H1 (cell line): ENCODE measurements at regions of chr4 and their contacts with region 1.

Region 1: GRCh38 chr4:151015459-151016347 is 619 bp upstream of the LRBA start:
- DNase-seq: peak; percentile 73 to 91
- H3K4me3 ChIP-seq: peak overlapping the region; percentile 38 to 99 (median 82)
- H3K27ac ChIP-seq: peak overlapping the region; percentile 96
- H3K4me1 ChIP-seq: peaks cover 0 to 2% (median 0%) of the 10 kb centered on the region in 4 experiments; a peak in 1 of 7 replicates
- H3K27me3 ChIP-seq: no peaks in the 10 kb centered on the region
- CTCF ChIP-seq: no peak
- EP300 ChIP-seq: no peak; a peak in 1 of 3 replicates
- POLR2A ChIP-seq: peak; percentile 63 to 93
- RAD21 ChIP-seq: 0 out of 4 replicates have a peak, but pooled peaks of 1 of the 2 experiments have one; percentile 3

Region 2: GRCh38 chr4:151004222-151004621 is 11.5 kb before region 1 on chr4:
- CTCF ChIA-PET with region 1: no interaction called
- POLR2A ChIA-PET with region 1: interaction called, 44 read pairs
- DNase-seq: no peak
- H3K4me3 ChIP-seq: no peak overlapping the region
- H3K27ac ChIP-seq: no peak overlapping the region
- H3K4me1 ChIP-seq: peaks cover 0 to 7% (median 6%) of the 10 kb centered on the region in 4 experiments; a peak in 5 of 7 replicates
- H3K27me3 ChIP-seq: no peaks in the 10 kb centered on the region
- CTCF ChIP-seq: no peak
- EP300 ChIP-seq: no peak
- POLR2A ChIP-seq: no peak
- RAD21 ChIP-seq: no peak

Region 3: GRCh38 chr4:151029537-151029936 is 13.8 kb after region 1 on chr4:
- CTCF ChIA-PET with region 1: no interaction called
- POLR2A ChIA-PET with region 1: interaction called, 14 read pairs
- DNase-seq: no peak
- H3K4me3 ChIP-seq: no peak overlapping the region
- H3K27ac ChIP-seq: no peak overlapping the region
- H3K4me1 ChIP-seq: peaks cover 0 to 3% (median 0%) of the 10 kb centered on the region in 4 experiments; a peak in 1 of 7 replicates
- H3K27me3 ChIP-seq: no peaks in the 10 kb centered on the region
- CTCF ChIP-seq: no peak
- EP300 ChIP-seq: no peak
- POLR2A ChIP-seq: no peak
- RAD21 ChIP-seq: no peak

Region 4: GRCh38 chr4:151049430-151049884 is 33.8 kb after region 1 on chr4:
- CTCF ChIA-PET with region 1: interaction called, 4 read pairs
- POLR2A ChIA-PET with region 1: interaction called, 28 read pairs
- DNase-seq: peak; percentile 77 to 89
- H3K4me3 ChIP-seq: peak overlapping the region; percentile 28 to 58 (median 36); a peak in 6 of 8 replicates
- H3K27ac ChIP-seq: peak overlapping the region; percentile 60; the same call in 1 of the 2 replicates
- H3K4me1 ChIP-seq: peaks cover 4 to 7% (median 4%) of the 10 kb centered on the region in 4 experiments; a peak in 5 of 7 replicates
- H3K27me3 ChIP-seq: no peaks in the 10 kb centered on the region
- CTCF ChIP-seq: no peak
- EP300 ChIP-seq: peak in 1 of 2 experiments; percentile 76; a peak in 1 of 3 replicates
- POLR2A ChIP-seq: peak; percentile 94 to 97
- RAD21 ChIP-seq: no peak

Region 5: DNA sequence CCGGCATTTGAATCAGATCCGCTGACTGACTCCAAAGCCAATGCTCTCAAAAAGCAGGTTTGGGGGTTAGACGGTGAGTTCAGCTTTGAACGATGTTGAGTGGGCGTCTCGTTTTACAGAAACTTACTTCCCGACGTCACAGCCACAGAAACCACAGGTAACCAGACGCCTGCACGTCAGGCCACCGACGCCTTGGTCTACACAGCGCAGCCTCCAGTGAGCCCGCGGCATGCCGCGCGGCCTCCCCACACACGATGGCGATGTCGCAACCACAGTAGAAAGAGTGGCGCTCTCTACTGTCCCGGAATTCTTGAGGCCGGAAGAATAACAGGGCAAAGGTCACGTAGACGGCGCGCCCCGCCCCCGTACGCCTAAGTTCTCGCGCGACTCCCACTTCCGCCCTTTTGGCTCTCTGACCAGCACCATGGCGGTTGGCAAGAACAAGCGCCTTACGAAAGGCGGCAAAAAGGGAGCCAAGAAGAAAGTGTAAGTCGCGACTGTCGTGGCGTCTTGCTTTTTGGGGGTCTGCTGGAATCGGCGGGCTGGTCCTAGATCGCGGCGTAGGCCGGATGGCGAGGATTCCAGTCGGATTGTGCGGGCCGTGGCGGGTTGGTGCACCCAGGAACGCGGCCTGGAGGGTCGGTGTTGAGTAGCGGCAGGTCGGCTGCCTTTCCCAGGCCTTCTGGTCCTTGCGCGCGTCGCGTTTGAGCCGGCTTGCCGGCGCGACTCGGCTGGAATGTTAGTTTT is 83.7 kb after region 1 on chr4 and contains the start of gene RPS3A:
- CTCF ChIA-PET with region 1: interaction called, 5 read pairs
- POLR2A ChIA-PET with region 1: interaction called, 22 read pairs
- DNase-seq: peak; percentile 96 to 100
- H3K4me3 ChIP-seq: peak within 1 kb of the TSS; percentile 77 to 100 (median 94)
- H3K27ac ChIP-seq: peak within 1 kb of the TSS; percentile 95
- H3K4me1 ChIP-seq: peaks cover 0 to 1% (median 0%) of the 10 kb centered on the region in 4 experiments; a peak in 1 of 7 replicates
- H3K27me3 ChIP-seq: no peaks in the 10 kb centered on the region
- CTCF ChIP-seq: peak; percentile 84 to 96 (median 84)
- EP300 ChIP-seq: peak in 1 of 2 experiments; percentile 90; a peak in 2 of 3 replicates
- POLR2A ChIP-seq: peak; percentile 99 to 100
- RAD21 ChIP-seq: peak in 1 of 2 experiments; percentile 5; a peak in 1 of 4 replicates
- total RNA-seq, gene RPS3A: 2,726 and 2,822 TPM in 2 replicates

Region 6: GRCh38 chr4:151117371-151117962 is 101.8 kb after region 1 on chr4:
- CTCF ChIA-PET with region 1: no interaction called
- POLR2A ChIA-PET with region 1: no interaction called
- DNase-seq: peak in 1 of 2 experiments; percentile 78
- H3K4me3 ChIP-seq: no peak overlapping the region
- H3K27ac ChIP-seq: no peak overlapping the region
- H3K4me1 ChIP-seq: no peaks in the 10 kb centered on the region
- H3K27me3 ChIP-seq: no peaks in the 10 kb centered on the region
- CTCF ChIP-seq: peak in 2 of 3 experiments; percentile 56 to 67; a peak in 2 of 4 replicates
- EP300 ChIP-seq: no peak
- POLR2A ChIP-seq: no peak
- RAD21 ChIP-seq: peak; percentile 87 to 88